Activated CD4-positive, alpha-beta memory T cell treated with anti-CD3 and anti-CD28 coated beads, Interleukin-2, amount 10 ng/mL, durations not matched to agents 7 days and 5 days (primary cell): ENCODE measurements at regions of chr16 and their contacts with region 1.

Region 1: DNA sequence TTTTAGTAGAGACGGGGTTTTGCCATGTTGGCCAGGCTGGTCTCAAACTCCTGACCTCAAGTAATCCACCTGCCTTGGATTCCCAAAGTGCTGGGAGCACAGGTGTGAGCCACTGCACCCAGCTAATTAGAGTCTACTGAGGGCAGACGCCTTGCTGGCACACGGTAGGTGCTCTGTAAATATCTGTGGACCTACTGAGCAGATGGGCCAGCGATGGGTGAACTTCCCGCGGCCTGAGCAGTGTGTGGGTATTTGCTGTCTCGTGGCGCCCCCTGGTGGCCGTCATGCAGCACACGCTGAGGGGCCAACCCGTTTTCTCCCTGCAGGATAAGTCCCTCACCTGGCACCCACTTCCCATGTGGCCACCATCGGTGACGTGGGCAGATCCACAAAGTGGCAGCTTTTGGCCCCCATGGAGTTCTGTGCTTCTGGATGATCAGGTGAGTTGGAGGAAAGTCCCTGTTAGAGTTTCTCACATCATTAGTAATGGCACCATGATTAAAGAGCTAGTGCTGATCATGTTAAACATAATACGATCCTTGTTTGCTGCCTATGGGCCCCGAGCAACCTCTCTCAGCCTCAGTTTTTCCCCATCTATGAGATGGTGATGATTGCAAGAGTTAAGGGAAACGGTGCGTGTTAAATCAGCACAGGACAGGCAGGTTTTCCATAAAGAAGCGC is 40.7 kb downstream of the ZDHHC7 start:
- DNase-seq: peak; percentile 81
- H3K4me3 Mint-ChIP-seq: no peak overlapping the region
- H3K27ac Mint-ChIP-seq: no peak overlapping the region
- H3K4me1 Mint-ChIP-seq: peaks cover 4% of the 10 kb centered on the region
- H3K27me3 Mint-ChIP-seq: peaks cover 5% of the 10 kb centered on the region

Region 2: GRCh38 chr16:84754353-84754856 is 216.2 kb before region 1 on chr16:
- CTCF ChIA-PET with region 1: interaction called, 92 read pairs
- POLR2A ChIA-PET with region 1: interaction called, 5 read pairs
- DNase-seq: peak; percentile 75
- H3K4me3 Mint-ChIP-seq: peak overlapping the region; percentile 58
- H3K27ac Mint-ChIP-seq: peak overlapping the region; percentile 53
- H3K4me1 Mint-ChIP-seq: peaks cover 83% of the 10 kb centered on the region
- H3K27me3 Mint-ChIP-seq: no peaks in the 10 kb centered on the region

Region 3: DNA sequence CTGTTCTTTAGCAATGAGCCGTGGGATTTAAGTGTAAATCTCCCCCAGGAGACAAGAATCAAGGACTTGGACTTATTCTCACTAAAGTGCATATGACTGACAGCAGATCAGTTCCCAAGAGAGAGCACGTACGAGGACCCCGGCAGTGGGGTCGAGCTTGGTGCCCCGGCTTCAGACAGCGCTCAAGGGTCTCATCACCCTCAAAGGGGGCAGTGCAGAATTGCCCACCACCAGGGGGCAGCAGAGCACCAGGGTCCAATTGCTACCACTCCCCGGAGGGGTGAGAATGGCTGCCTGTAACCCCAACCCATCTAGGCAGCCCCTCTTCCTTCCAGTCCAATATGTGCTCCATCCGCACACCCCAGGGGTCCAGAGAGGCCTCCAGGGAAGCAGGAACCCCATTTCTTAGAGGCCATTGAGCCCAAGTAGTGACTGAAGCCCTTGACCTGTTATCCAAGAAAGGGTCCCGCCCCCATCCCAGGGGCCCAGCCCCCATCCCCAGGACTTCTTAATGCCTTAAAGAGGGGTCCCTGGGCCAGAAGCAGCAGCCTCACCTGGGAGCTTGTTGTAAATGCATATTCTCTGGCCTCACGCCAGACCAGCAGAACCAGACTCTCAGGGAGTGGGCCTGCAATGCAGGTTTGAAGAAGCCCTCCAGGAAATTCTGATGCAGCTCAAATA is 45.4 kb before region 1 on chr16:
- CTCF ChIA-PET with region 1: interaction called, 27 read pairs
- POLR2A ChIA-PET with region 1: no interaction called
- DNase-seq: peak; percentile 68
- H3K4me3 Mint-ChIP-seq: no peak overlapping the region
- H3K27ac Mint-ChIP-seq: no peak overlapping the region
- H3K4me1 Mint-ChIP-seq: no peaks in the 10 kb centered on the region
- H3K27me3 Mint-ChIP-seq: peaks cover 3% of the 10 kb centered on the region

Region 4: GRCh38 chr16:84952335-84953189 is 18.0 kb before region 1 on chr16:
- CTCF ChIA-PET with region 1: interaction called, 60 read pairs
- POLR2A ChIA-PET with region 1: no interaction called
- DNase-seq: peak; percentile 74
- H3K4me3 Mint-ChIP-seq: no peak overlapping the region
- H3K27ac Mint-ChIP-seq: no peak overlapping the region
- H3K4me1 Mint-ChIP-seq: peaks cover 2% of the 10 kb centered on the region
- H3K27me3 Mint-ChIP-seq: peaks cover 5% of the 10 kb centered on the region

Region 5: GRCh38 chr16:85046931-85047866 is 76.6 kb after region 1 on chr16:
- CTCF ChIA-PET with region 1: no interaction called
- POLR2A ChIA-PET with region 1: no interaction called
- DNase-seq: no peak
- H3K4me3 Mint-ChIP-seq: no peak overlapping the region
- H3K27ac Mint-ChIP-seq: no peak overlapping the region
- H3K4me1 Mint-ChIP-seq: no peaks in the 10 kb centered on the region
- H3K27me3 Mint-ChIP-seq: peaks cover 4% of the 10 kb centered on the region